CD4-positive, alpha-beta memory T cell (primary cell): ENCODE measurements at regions of chr18 and their contacts with region 1.

Region 1: DNA sequence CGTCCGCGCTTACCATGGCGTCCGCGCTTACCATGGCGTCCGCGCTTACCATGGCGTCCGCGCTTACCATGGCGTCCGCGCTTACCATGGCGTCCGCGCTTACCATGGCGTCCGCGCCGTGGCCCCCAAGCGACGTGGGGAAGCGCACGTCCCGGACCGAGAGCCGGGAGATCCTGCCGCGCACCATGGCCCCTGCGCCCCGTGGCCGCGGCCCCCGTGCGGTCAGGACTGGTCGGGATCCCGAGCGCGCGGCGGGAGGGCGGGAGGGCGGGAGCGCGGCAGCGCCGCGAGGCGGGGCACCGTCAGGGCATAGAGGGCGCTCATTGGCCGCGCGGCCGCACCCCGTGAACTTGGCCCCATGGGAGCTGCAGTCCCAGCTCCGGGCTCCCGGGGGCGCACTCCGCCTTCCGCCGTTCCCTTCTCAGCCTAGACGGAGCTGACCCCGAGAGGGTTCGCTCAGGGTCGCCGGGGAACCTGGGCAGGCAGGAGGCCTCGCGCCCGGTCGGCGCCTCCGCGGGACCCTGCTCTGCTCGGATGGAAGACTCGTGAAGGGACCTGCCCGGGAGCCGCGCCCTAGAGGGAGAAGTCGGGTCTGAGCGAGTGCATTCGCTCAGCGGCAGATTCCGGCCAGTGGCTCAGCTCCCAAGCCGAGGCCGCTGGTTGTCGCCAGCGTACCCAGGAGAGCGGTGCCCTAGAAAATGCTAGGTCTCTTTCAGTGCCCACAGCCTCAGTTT is at the start of gene ENOSF1:
- DNase-seq: peak; percentile 73 to 82 (median 77)
- H3K4me3 ChIP-seq: peak within 1 kb of the TSS; percentile 93
- H3K4me3 Mint-ChIP-seq: peak within 1 kb of the TSS; percentile 79 to 96 (median 92)
- H3K27ac ChIP-seq: peak within 1 kb of the TSS; percentile 73
- H3K27ac Mint-ChIP-seq: peak within 1 kb of the TSS; percentile 94 to 98 (median 97)
- H3K4me1 ChIP-seq: peaks cover 22% of the 10 kb centered on the region
- H3K4me1 Mint-ChIP-seq: peaks cover 20 to 38% (median 29%) of the 10 kb centered on the region in 4 donors
- H3K27me3 ChIP-seq: no peaks in the 10 kb centered on the region
- H3K27me3 Mint-ChIP-seq: no peaks in the 10 kb centered on the region
- total RNA-seq, gene ENOSF1: 107 to 133 TPM

Region 2: DNA sequence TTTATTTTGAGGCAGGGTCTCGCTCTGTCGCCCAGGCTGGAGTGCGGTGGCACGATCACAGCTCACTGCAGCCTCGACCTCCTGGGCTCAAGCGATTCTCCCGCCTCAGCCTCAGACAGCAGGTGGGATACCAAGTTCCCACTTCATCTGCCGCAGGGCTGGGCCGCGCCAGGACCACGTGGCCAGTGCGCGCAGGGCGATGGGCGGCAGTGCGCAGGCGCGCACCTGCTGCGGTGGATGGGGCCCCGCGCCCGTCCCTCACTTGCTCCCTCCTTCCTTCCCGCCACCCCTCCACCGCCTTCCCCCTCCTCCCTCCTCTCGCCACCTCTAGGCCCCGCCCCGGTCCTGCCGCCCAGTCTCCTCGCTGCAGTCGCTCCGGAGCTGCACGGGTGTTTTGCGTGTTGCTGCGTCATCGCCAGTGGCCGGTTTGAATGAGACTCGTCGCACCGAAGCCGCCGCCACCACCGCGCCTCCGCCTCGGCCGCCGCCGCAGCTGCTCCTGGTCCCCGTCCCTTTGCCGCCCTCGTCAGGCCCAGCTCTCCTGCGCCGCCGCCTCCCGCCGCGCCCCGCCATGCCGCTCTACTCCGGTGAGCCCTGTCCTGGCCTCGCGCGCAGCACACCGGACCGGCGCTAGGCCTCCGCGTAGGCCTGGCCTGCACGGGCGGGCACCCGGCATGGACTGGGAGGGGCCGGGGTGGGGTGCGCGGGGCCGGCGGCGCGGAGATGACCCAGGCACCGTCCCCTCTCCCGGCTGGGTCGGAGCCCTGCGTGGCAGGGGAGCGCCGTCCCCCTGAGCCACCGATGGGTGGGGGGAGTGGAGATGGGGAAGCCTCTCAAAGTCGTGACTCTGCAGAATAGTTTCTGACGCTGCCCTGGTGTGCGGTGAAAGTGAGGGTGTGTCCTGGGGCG is 554.2 kb before region 1 on chr18 and contains the start of gene USP14:
- CTCF ChIA-PET with region 1: no interaction called
- POLR2A ChIA-PET with region 1: no interaction called
- intact Hi-C with region 1: loop called (anchors 1 kb)
- DNase-seq: peak; percentile 93 to 98 (median 96)
- H3K4me3 ChIP-seq: peak within 1 kb of the TSS; percentile 18 to 81
- H3K4me3 Mint-ChIP-seq: peak within 1 kb of the TSS; percentile 88 to 98 (median 96)
- H3K27ac ChIP-seq: peak within 1 kb of the TSS; percentile 81
- H3K27ac Mint-ChIP-seq: peak within 1 kb of the TSS; percentile 91 to 98 (median 95)
- H3K4me1 ChIP-seq: peaks cover 29% of the 10 kb centered on the region
- H3K4me1 Mint-ChIP-seq: peaks cover 18 to 35% (median 29%) of the 10 kb centered on the region in 4 donors
- H3K27me3 ChIP-seq: no peaks in the 10 kb centered on the region
- H3K27me3 Mint-ChIP-seq: no peaks in the 10 kb centered on the region
- total RNA-seq, gene USP14: 42.6 to 43.6 TPM

Region 3: DNA sequence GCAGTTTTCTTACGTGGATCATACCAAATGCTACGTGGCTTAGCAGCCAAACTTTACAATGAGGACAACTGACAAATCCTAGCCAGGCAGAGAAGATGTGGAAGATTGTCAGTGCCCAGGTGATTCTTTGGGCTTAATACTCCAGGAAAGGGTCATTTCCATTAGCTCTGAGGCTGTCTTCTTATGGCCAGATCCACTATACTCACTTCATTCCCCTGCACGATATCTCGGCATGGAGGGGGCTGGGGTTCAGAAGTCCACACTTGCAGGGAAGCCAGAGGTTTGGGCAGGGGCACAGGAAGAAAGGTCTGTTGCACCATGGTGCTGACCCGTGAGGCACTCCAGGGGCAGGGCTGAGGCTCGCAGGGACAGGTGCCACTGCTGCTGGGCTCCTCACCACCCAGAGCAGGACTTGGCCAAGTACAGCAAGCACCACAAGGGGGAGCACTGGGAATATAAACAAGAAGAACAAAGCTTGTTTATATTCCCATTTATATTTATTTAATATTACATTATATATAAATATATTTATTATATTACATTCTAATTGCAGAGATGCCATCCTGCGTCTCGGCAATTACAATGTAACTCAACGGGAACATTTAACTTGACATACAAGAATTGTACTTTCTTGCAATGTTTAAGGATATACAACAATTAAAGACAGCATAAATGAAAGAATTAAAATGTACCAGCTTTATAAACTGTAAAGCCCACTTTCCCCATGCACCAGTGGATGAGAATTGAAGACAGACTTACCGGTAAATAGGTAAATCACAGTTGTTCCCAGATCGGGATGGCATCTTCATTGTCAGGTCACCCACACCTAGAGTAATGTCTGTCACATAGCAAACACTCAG is 88.6 kb before region 1 on chr18:
- CTCF ChIA-PET with region 1: interaction called, 5 read pairs
- POLR2A ChIA-PET with region 1: interaction called, 4 read pairs
- intact Hi-C with region 1: loop called (anchors 2 kb)
- DNase-seq: peak; percentile 30 to 58 (median 44)
- H3K4me3 ChIP-seq: no peak overlapping the region
- H3K4me3 Mint-ChIP-seq: no peak overlapping the region
- H3K27ac ChIP-seq: no peak overlapping the region
- H3K27ac Mint-ChIP-seq: no peak overlapping the region
- H3K4me1 ChIP-seq: no peaks in the 10 kb centered on the region
- H3K4me1 Mint-ChIP-seq: peaks cover 0 to 2% (median 0%) of the 10 kb centered on the region in 4 donors
- H3K27me3 ChIP-seq: no peaks in the 10 kb centered on the region
- H3K27me3 Mint-ChIP-seq: peaks cover 3 to 26% of the 10 kb centered on the region in 2 donors

Region 4: DNA sequence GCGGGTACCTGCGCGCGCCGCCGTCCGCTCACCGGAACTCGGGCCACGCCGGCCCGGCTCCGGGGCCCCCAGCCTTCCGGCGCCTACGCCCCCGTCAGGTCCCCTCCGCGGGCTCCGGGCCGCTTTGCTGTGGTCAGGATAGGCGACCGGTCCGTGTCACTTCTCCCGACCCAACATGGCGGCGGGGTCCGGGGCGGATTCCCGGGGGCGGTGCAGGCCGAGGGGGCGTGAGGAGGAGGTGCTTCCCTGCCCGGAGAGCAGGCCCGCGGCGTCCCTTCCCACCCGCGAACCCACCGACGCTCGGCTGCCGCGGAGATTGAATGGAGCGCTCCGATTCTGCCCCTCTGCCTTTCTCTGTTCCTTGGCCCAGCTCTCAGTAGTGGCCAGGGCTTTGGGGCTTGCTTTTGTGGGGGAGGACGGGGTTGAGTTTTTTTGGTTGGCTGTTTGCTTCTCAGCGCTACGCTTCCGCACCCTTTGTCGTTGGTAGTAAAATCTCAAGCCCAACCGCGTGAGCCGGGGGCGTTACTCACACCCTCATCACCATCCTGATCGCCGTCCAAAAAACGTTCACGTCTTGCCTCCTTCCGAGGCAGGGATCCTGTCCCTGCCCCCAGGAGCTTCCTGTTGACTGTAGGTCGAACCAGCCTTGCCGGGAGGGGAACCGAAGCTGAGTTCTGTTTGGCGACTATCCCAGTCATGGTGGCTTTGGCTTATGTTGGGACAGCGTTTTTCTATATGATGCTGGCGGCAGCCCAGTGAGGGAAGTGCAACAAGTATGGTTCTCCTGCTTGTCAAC is 100.0 kb after region 1 on chr18:
- CTCF ChIA-PET with region 1: interaction called, 3 read pairs
- POLR2A ChIA-PET with region 1: interaction called, 8 read pairs
- intact Hi-C with region 1: loop called (anchors 1 kb)
- DNase-seq: peak; percentile 80 to 86 (median 81)
- H3K4me3 ChIP-seq: peak overlapping the region; percentile 64 to 76
- H3K4me3 Mint-ChIP-seq: peak overlapping the region; percentile 83 to 97 (median 94)
- H3K27ac ChIP-seq: peak overlapping the region; percentile 80
- H3K27ac Mint-ChIP-seq: peak overlapping the region; percentile 97 to 99 (median 98)
- H3K4me1 ChIP-seq: peaks cover 58% of the 10 kb centered on the region
- H3K4me1 Mint-ChIP-seq: peaks cover 40 to 58% (median 50%) of the 10 kb centered on the region in 4 donors
- H3K27me3 ChIP-seq: no peaks in the 10 kb centered on the region
- H3K27me3 Mint-ChIP-seq: peaks cover 0 to 5% of the 10 kb centered on the region in 2 donors

Region 5: DNA sequence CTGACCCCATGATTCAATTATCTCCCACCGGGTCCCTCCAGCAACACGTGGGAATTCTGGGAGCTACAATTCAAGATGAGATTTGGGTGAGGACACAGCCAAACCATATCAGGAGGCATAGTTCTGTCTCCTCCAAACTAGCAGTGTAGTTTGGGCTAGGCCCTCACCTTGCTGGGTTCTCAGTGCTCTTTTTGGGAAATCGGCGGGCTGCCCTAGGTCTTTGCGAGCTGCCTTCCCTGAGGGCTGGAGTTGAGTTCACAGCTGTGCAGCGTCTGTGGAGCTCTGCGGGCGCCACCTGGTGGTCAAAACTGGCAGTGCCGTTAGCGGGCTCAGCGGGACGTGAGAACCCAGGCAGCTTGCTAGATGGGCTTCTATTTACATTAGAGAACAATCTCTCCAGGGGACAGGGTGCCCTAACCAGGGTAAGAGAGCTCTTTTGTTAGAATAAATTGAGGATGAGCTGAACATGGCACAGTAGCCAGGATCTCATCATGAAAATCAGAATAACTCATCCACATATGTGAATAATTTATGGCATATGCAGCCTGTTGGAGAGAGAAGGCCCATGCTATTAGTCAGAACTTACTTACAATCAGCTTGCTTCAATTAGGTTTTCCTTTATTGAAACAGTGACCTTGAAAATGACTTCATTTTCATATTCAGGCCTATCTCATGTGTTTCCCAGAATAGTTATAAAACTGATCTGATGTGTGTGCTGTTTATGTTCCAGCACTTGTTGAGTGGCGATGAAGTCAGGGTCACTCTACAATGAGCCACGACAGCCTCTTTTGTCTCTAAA is 126.9 kb after region 1 on chr18:
- CTCF ChIA-PET with region 1: interaction called, 4 read pairs
- POLR2A ChIA-PET with region 1: no interaction called
- intact Hi-C with region 1: loop called (anchors 1 kb)
- DNase-seq: peak; percentile 67 to 75 (median 72)
- H3K4me3 ChIP-seq: no peak overlapping the region
- H3K4me3 Mint-ChIP-seq: no peak overlapping the region
- H3K27ac ChIP-seq: no peak overlapping the region
- H3K27ac Mint-ChIP-seq: no peak overlapping the region
- H3K4me1 ChIP-seq: no peaks in the 10 kb centered on the region
- H3K4me1 Mint-ChIP-seq: peaks cover 0 to 6% (median 0%) of the 10 kb centered on the region in 4 donors
- H3K27me3 ChIP-seq: no peaks in the 10 kb centered on the region
- H3K27me3 Mint-ChIP-seq: peaks cover 2 to 8% of the 10 kb centered on the region in 2 donors